ENCODE measurements at regions of chr13 and their contacts with region 1.

Region 1: GRCh38 chr13:44484562-44485138 is 91.5 kb downstream of the TSC22D1 start:
- DNase-seq: no peak
- ATAC-seq: peak; percentile 51
- H3K4me3 Mint-ChIP-seq: peak overlapping the region; percentile 66
- H3K27ac Mint-ChIP-seq: peak overlapping the region; percentile 71
- H3K4me1 Mint-ChIP-seq: peaks cover 15% of the 10 kb centered on the region
- H3K27me3 Mint-ChIP-seq: no peaks in the 10 kb centered on the region

Region 2: GRCh38 chr13:44449999-44450708 is 34.5 kb before region 1 on chr13:
- CTCF ChIA-PET with region 1: no interaction called
- POLR2A ChIA-PET with region 1: no interaction called
- DNase-seq: no peak
- ATAC-seq: no peak
- H3K4me3 Mint-ChIP-seq: no peak overlapping the region
- H3K27ac Mint-ChIP-seq: no peak overlapping the region
- H3K4me1 Mint-ChIP-seq: no peaks in the 10 kb centered on the region
- H3K27me3 Mint-ChIP-seq: peaks cover under 1% of the 10 kb centered on the region

Region 3: GRCh38 chr13:44470638-44471562 is 13.8 kb before region 1 on chr13:
- CTCF ChIA-PET with region 1: interaction called, 16 read pairs
- POLR2A ChIA-PET with region 1: interaction called, 3 read pairs
- DNase-seq: no peak
- ATAC-seq: no peak
- H3K4me3 Mint-ChIP-seq: no peak overlapping the region
- H3K27ac Mint-ChIP-seq: no peak overlapping the region
- H3K4me1 Mint-ChIP-seq: no peaks in the 10 kb centered on the region
- H3K27me3 Mint-ChIP-seq: no peaks in the 10 kb centered on the region

Region 4: GRCh38 chr13:44573790-44574465 is 89.3 kb after region 1 on chr13:
- CTCF ChIA-PET with region 1: interaction called, 11 read pairs
- POLR2A ChIA-PET with region 1: no interaction called
- DNase-seq: peak; percentile 24
- ATAC-seq: no peak
- H3K4me3 Mint-ChIP-seq: no peak overlapping the region
- H3K27ac Mint-ChIP-seq: no peak overlapping the region
- H3K4me1 Mint-ChIP-seq: peaks cover 43% of the 10 kb centered on the region
- H3K27me3 Mint-ChIP-seq: peaks cover 5% of the 10 kb centered on the region

Region 5: DNA sequence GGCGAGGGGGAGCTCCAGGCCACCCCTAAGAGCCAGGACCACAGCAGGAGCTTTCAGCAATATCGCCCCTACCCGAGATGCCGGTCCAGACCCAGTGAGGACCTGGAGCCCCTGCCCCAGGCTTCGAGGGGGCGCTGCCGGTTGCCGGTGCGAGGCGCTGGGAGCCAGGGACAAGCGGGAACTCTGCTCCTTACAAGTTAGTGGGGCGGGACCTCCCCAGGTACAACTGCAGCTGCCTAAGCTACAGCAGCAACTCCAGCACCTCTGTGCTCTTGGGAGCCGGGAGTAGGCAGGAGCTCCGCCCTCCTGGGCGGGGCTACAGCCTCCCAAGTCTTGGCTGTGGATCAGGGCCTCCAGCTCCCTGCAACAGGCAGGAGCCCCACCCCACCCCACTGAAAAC is 106.7 kb after region 1 on chr13:
- CTCF ChIA-PET with region 1: no interaction called
- POLR2A ChIA-PET with region 1: no interaction called
- DNase-seq: no peak
- ATAC-seq: no peak
- H3K4me3 Mint-ChIP-seq: no peak overlapping the region
- H3K27ac Mint-ChIP-seq: no peak overlapping the region
- H3K4me1 Mint-ChIP-seq: no peaks in the 10 kb centered on the region
- H3K27me3 Mint-ChIP-seq: peaks cover 5% of the 10 kb centered on the region

Region 6: DNA sequence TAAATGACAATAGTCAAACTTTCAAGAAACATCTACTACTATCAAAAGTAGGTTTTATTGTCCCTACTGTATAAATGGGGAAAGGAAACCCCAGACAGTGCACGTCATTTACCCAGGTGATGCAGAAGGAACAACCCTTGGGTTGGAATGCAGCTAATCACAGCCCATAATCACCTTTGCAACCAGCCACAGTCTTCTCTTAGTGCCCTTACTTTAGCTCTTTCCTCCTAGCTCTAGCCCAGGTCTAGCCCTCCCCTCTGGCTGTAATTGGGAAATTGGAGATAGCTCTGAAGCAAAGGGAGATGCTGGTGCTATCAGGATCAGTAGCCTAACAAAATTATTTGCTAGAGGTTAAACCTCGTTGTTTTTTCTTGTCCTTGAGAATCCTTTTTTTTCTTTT is 116.9 kb after region 1 on chr13:
- CTCF ChIA-PET with region 1: no interaction called
- POLR2A ChIA-PET with region 1: no interaction called
- DNase-seq: no peak
- ATAC-seq: no peak
- H3K4me3 Mint-ChIP-seq: no peak overlapping the region
- H3K27ac Mint-ChIP-seq: no peak overlapping the region
- H3K4me1 Mint-ChIP-seq: no peaks in the 10 kb centered on the region
- H3K27me3 Mint-ChIP-seq: peaks cover 7% of the 10 kb centered on the region

Region 7: GRCh38 chr13:44884076-44884729 is 399.6 kb after region 1 on chr13:
- CTCF ChIA-PET with region 1: interaction called, 11 read pairs
- POLR2A ChIA-PET with region 1: no interaction called
- DNase-seq: no peak
- ATAC-seq: no peak
- H3K4me3 Mint-ChIP-seq: no peak overlapping the region
- H3K27ac Mint-ChIP-seq: no peak overlapping the region
- H3K4me1 Mint-ChIP-seq: no peaks in the 10 kb centered on the region
- H3K27me3 Mint-ChIP-seq: peaks cover 2% of the 10 kb centered on the region

Region 8: GRCh38 chr13:44917589-44918325 is 433.1 kb after region 1 on chr13:
- CTCF ChIA-PET with region 1: interaction called, 26 read pairs
- POLR2A ChIA-PET with region 1: interaction called, 3 read pairs
- DNase-seq: peak; percentile 97
- ATAC-seq: peak; percentile 86
- H3K4me3 Mint-ChIP-seq: no peak overlapping the region
- H3K27ac Mint-ChIP-seq: no peak overlapping the region
- H3K4me1 Mint-ChIP-seq: peaks cover 2% of the 10 kb centered on the region
- H3K27me3 Mint-ChIP-seq: no peaks in the 10 kb centered on the region

Region 9: DNA sequence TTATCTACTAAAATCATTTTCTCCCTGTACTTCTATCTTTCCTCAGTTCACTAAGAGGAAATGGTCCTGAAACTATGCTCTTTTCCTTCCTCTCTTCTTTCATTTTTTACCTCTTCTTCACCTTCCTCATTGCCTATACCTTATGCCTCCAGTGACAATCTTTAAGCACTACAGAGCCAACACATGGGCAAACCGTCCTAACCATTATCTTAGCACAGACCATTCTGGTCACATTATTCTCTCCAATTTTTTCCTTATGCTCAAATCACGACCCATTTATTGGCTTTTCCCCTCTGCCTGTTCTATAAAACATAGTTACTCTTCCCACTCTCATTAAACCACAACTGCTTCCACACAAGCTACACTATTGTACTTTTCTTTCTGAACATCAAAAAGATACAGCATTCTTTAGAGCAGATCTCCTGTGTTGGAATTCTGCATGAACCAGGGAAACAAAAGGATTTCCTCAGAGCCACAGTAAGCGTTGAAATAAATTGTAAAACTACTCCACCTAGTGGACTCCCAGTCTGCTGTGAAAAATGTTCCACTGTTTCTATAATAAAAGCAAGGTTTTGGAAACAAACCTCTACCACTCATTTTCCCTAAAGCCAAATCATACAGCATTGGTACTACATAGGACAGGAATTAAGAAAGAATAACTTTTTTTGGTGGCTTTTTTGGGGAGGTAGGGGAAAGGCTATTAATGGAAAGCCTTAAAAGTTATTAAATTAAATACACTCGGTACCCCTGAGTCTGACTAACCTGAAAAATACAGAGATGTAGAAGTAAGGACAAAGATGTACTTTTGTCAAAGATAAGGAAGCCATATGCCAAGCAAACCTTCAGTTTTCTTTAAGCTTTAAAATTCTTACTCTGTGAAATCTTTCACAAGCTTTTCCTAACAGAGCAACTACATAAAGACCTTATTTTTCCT is 485.2 kb after region 1 on chr13:
- CTCF ChIA-PET with region 1: interaction called, 31 read pairs
- POLR2A ChIA-PET with region 1: no interaction called
- DNase-seq: no peak
- ATAC-seq: no peak
- H3K4me3 Mint-ChIP-seq: no peak overlapping the region
- H3K27ac Mint-ChIP-seq: no peak overlapping the region
- H3K4me1 Mint-ChIP-seq: no peaks in the 10 kb centered on the region
- H3K27me3 Mint-ChIP-seq: no peaks in the 10 kb centered on the region